Heart left ventricle (tissue), 16 donors: ENCODE measurements at regions of chr5 and their contacts with region 1.

Region 1: DNA sequence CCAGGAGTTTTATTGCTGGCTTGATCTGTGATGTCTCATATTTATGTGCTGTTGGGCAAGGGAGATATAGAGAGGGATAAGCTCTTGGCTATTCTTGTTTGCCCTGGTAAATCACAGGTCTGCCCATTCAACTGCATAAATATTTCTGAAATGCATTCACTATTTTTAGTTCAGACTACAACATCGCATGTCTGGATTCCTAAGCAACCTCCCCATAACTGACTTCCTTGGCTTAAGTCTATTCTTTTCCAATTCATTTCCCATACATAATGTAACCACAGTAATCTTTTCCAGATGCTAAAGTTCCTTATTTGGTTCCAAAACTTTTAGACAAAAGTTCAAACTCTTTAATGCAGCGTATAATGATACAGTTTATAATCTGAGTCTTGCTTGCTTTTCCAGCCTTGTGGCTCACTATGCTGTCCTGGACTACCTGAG is 321.4 kb upstream of the ACTBL2 start:
- DNase-seq: no peak
- ATAC-seq: no peak
- H3K4me3 ChIP-seq: no peak overlapping the region
- H3K27ac ChIP-seq: no peak overlapping the region
- H3K4me1 ChIP-seq: peaks cover 0 to 11% (median 0%) of the 10 kb centered on the region in 12 donors
- H3K27me3 ChIP-seq: no peaks in the 10 kb centered on the region
- CTCF ChIP-seq: no peak
- POLR2A ChIP-seq: no peak

Region 2: GRCh38 chr5:57429513-57430120 is 374.4 kb before region 1 on chr5:
- intact Hi-C with region 1: no loop called
- DNase-seq: no peak
- ATAC-seq: no peak
- H3K4me3 ChIP-seq: no peak overlapping the region
- H3K27ac ChIP-seq: no peak overlapping the region
- H3K4me1 ChIP-seq: peaks cover 0 to 10% (median under 1%) of the 10 kb centered on the region in 12 donors
- H3K27me3 ChIP-seq: no peaks in the 10 kb centered on the region
- CTCF ChIP-seq: no peak
- POLR2A ChIP-seq: no peak

Region 3: DNA sequence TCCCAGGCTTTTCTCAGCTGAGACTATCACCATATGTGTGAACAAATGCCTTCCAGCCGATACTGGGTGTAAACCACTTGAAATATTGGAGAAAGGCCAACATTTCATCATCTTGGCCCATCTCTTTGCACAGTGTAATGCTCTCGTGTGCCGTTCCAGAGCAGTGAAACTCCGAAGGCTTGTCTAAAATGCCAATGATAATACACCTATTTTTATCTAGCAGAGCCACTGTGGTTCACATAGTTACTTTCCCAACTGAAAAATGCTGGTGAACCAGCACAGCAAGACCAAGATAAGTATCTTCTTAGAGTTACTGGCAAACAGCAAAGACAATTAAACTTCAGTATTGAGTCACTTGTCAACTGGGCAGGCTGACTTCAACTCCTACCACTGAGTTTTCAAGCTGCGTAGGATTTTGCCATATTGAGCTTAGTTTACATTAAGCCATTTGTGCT is 58.5 kb after region 1 on chr5:
- intact Hi-C with region 1: loop called in 1 of 10 experiments (anchors 10 kb)
- DNase-seq: peak in 2 of 5 donors; percentile 27 to 36
- ATAC-seq: peak; percentile 91 to 96 (median 94)
- H3K4me3 ChIP-seq: no peak overlapping the region
- H3K27ac ChIP-seq: peak overlapping the region in 8 of 12 donors; percentile 1 to 51 (median 40)
- H3K4me1 ChIP-seq: peaks cover 0 to 19% (median 3%) of the 10 kb centered on the region in 12 donors
- H3K27me3 ChIP-seq: no peaks in the 10 kb centered on the region
- CTCF ChIP-seq: no peak
- POLR2A ChIP-seq: no peak

Region 4: GRCh38 chr5:58871648-58872242 is 1067.7 kb after region 1 on chr5:
- intact Hi-C with region 1: no loop called
- DNase-seq: no peak
- ATAC-seq: peak in 2 of 4 donors; percentile 24
- H3K4me3 ChIP-seq: no peak overlapping the region
- H3K27ac ChIP-seq: no peak overlapping the region
- H3K4me1 ChIP-seq: no peaks in the 10 kb centered on the region
- H3K27me3 ChIP-seq: no peaks in the 10 kb centered on the region
- CTCF ChIP-seq: peak; percentile 32 to 72 (median 58)
- POLR2A ChIP-seq: no peak